ENCODE measurements at regions of chr21 and their contacts with region 1.

Region 1: DNA sequence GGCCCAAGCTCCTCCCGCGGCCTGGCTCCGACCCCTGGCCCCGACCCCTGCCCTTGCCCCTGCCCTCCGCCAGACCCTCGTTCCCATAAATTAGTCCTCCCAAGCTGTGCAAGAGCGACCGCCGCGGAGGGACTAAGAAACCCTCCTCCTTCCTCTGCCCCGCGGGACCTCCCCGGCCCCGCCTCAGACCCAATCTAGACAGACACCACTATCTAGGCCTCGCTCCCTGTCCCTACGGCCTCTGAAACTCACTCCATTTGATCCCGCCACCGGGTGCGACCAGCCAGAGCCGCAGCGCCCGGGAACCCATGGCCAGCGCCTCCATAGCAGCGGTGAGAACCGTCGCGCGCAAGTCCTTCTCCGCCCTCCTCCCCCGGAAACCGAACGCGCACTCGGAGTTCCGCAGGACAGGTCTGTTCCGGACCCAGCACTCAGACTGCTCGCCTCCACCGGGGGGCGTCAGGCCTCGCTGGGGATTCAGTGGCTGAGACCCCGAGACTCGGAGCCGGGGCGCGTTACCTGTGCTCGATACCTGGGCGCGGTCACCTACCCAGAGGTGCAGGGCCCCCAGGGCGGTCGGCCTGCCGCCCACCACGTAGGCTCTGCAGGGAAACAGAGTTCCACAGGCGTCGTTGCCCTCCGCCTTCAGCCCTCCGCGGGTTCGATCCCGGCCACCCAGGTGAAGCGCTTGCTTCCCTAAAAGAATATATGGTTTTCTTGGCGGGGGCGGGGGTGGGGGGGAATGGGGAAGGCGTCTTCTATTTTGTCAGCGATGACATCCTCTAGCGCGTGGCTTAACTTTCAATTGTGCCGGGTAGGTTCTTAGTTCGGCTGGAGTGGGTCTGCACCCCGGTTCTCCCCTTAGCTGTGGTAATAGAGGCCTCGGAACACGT is at the start of gene MRPL39:
- DNase-seq: peak; percentile 62
- ATAC-seq: peak; percentile 97
- H3K4me3 ChIP-seq: peak within 1 kb of the TSS; percentile 94
- H3K27ac ChIP-seq: peak within 1 kb of the TSS; percentile 79
- H3K4me1 ChIP-seq: peaks cover 9% of the 10 kb centered on the region; the same call in 1 of the 2 replicates
- H3K27me3 ChIP-seq: no peaks in the 10 kb centered on the region
- CTCF ChIP-seq: peak; percentile 74 to 81 (median 78)
- EP300 ChIP-seq: 0 out of 4 replicates have a peak, but pooled peaks of 1 of the 2 experiments have one; percentile 11
- POLR2A ChIP-seq: peak; percentile 97
- RAD21 ChIP-seq: peak; percentile 53
- polyA plus RNA-seq, gene MRPL39: 220 to 292 TPM

Region 2: DNA sequence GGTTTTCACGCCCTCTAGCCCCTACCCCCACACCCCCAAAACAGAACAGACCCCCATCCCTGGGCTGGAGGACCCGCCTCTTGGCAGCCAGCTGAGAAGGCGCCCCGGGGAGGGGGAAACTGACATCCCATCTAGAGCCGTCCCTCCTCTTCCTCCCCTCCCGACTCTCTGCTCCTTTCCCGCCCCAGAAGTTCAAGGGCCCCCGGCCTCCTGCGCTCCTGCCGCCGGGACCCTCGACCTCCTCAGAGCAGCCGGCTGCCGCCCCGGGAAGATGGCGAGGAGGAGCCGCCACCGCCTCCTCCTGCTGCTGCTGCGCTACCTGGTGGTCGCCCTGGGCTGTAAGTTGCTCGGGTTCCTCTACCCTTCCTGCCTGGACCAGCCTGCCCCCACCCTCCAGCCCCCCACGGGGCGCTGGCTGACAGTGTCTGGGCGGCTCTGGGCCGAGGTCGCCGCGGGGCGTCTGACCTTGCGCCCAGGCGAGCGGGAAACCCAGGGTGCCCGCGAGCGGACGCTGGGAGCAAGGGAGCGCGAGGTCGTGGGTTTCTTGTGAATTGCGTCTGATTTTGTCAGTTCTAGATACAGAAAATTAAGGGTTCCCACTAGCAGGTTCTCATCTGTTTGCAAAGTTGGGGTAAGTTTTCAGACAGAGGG is 32.3 kb after region 1 on chr21:
- CTCF ChIA-PET with region 1: interaction called, 36 read pairs
- POLR2A ChIA-PET with region 1: interaction called, 3 read pairs
- RAD21 ChIA-PET with region 1: interaction called, 9 read pairs
- SMC1A ChIA-PET with region 1: interaction called, 5 read pairs
- in situ Hi-C with region 1: no loop called
- intact Hi-C with region 1: loop called (anchors 2 kb)
- DNase-seq: no peak
- ATAC-seq: peak; percentile 88
- H3K4me3 ChIP-seq: peak overlapping the region; percentile 77
- H3K27ac ChIP-seq: peak overlapping the region; percentile 46
- H3K4me1 ChIP-seq: peaks cover 13% of the 10 kb centered on the region; the same call in 1 of the 2 replicates
- H3K27me3 ChIP-seq: no peaks in the 10 kb centered on the region; a peak in 1 of 4 replicates
- CTCF ChIP-seq: peak; percentile 40 to 60 (median 58)
- EP300 ChIP-seq: no peak
- POLR2A ChIP-seq: peak; percentile 77
- RAD21 ChIP-seq: peak; percentile 25; the same call in 1 of the 2 replicates

Region 3: GRCh38 chr21:25708467-25709065 is 101.2 kb after region 1 on chr21:
- CTCF ChIA-PET with region 1: interaction called, 70 read pairs
- POLR2A ChIA-PET with region 1: no interaction called
- RAD21 ChIA-PET with region 1: interaction called, 7 read pairs
- SMC1A ChIA-PET with region 1: interaction called, 32 read pairs
- in situ Hi-C with region 1: loop called (anchors 5 kb)
- intact Hi-C with region 1: loop called (anchors 1 kb)
- DNase-seq: no peak
- ATAC-seq: peak; percentile 63
- H3K4me3 ChIP-seq: no peak overlapping the region
- H3K27ac ChIP-seq: no peak overlapping the region
- H3K4me1 ChIP-seq: no peaks in the 10 kb centered on the region
- H3K27me3 ChIP-seq: no peaks in the 10 kb centered on the region
- CTCF ChIP-seq: peak; percentile 66 to 74 (median 72)
- EP300 ChIP-seq: no peak
- POLR2A ChIP-seq: no peak
- RAD21 ChIP-seq: peak; percentile 75

Region 4: DNA sequence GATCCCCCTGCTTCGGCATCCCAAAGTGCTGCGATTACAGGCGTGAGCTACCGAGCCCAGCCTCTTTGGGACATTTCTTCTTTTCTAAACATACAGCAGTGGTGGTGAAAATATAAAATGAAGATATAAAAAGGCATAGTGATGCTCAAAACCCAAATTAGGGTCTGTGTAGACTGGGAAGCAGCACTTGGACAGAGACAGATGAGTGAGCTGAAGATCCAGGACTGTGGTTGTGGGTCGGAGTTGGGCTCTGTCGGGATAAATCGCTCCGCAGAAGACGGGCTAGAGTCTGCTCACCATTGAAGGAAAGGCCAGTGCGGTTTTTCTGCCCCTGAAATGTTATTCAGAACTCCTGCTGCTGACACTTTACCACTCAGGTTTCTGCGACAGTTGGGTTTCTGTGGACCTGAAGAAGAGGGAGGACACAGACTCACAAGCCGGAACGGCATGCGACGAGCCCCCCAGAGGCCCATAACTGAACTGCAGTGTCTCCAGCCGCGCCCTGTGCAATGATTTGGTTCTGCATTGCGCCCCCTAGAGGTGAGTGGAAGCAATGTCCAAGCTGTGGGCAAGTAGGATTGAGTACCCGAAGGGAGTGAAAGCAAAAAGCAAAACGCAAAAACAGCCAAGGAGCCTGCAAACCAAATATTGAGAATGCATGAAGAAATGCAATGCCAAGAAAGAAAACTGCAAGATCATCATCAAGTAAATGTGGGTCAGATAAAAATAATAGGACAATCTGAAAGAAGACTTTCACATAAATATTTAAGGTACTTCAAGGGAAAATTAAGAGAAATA is 194.0 kb after region 1 on chr21:
- CTCF ChIA-PET with region 1: interaction called, 31 read pairs
- POLR2A ChIA-PET with region 1: no interaction called
- RAD21 ChIA-PET with region 1: interaction called, 5 read pairs
- SMC1A ChIA-PET with region 1: interaction called, 3 read pairs
- in situ Hi-C with region 1: no loop called
- intact Hi-C with region 1: loop called (anchors 1 kb)
- DNase-seq: peak; percentile 59
- ATAC-seq: peak; percentile 100
- H3K4me3 ChIP-seq: no peak overlapping the region
- H3K27ac ChIP-seq: no peak overlapping the region
- H3K4me1 ChIP-seq: no peaks in the 10 kb centered on the region
- H3K27me3 ChIP-seq: no peaks in the 10 kb centered on the region
- CTCF ChIP-seq: peak; percentile 98 to 100 (median 99)
- EP300 ChIP-seq: no peak
- POLR2A ChIP-seq: no peak
- RAD21 ChIP-seq: peak; percentile 64

Region 5: GRCh38 chr21:26170471-26171257 is 563.3 kb after region 1 on chr21 and contains the start of gene APP:
- CTCF ChIA-PET with region 1: interaction called, 5 read pairs
- POLR2A ChIA-PET with region 1: no interaction called
- RAD21 ChIA-PET with region 1: interaction called, 4 read pairs
- SMC1A ChIA-PET with region 1: interaction called, 3 read pairs
- in situ Hi-C with region 1: loop called (anchors 10 kb)
- intact Hi-C with region 1: loop called (anchors 10 kb)
- DNase-seq: no peak
- ATAC-seq: peak; percentile 80
- H3K4me3 ChIP-seq: peak within 1 kb of the TSS; percentile 84
- H3K27ac ChIP-seq: peak within 1 kb of the TSS; percentile 57
- H3K4me1 ChIP-seq: no peaks in the 10 kb centered on the region
- H3K27me3 ChIP-seq: no peaks in the 10 kb centered on the region
- CTCF ChIP-seq: peak; percentile 73 to 80 (median 79)
- EP300 ChIP-seq: no peak
- POLR2A ChIP-seq: peak; percentile 95
- RAD21 ChIP-seq: peak; percentile 76
- polyA plus RNA-seq, gene APP: 8.8 to 15.4 TPM

Measured in GM12878 (cell line).